Heart right ventricle (tissue), 16 donors: ENCODE measurements at regions of chr15 and their contacts with region 1.

Region 1: DNA sequence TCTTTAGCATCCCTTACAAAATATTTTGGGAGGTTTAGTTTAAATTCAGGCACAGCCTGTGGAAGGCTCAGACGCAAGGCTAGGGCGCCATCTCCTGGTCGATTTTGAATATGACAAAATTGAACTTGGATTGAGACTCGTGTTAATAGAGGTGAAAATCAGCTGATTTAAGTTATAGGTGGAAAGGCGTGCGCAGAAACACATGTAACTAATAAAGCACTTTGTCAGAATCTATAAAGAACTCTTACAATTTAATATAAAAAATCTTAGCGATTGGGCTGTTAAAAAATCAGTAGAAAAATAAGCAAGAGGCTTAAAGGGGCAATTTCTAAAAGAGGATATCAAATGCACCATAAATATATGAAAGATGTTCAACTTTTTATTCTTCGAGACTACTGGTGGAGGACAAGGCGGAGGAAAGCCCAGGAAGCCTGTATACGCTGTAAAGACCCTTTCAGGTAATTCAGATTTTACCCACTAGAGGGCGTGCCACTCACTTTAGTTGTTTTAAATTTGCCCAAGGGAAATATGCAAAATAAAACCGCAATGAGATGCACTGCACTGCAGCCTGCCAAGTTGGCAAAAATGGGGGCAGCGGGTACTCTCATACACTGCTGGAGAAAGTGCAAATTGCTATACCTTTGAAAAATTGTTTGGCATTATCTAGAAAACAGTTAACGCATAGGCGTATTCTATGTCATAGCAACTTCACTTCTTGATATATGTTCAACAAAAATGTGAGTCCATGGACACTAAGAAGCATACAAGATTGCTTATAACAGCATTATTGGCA is 64.7 kb downstream of the SLC30A4 start:
- DNase-seq: peak in 1 of 2 donors; percentile 82
- ATAC-seq: peak; percentile 63 to 90 (median 82)
- H3K4me3 ChIP-seq: peak overlapping the region; percentile 12 to 72 (median 52)
- H3K27ac ChIP-seq: peak overlapping the region in 9 of 10 donors; percentile 33 to 83 (median 71)
- H3K4me1 ChIP-seq: peaks cover 0 to 52% (median 0%) of the 10 kb centered on the region in 9 donors
- H3K27me3 ChIP-seq: no peaks in the 10 kb centered on the region
- CTCF ChIP-seq: peak; percentile 60 to 82 (median 76)

Region 2: GRCh38 chr15:45166834-45167630 is 290.8 kb before region 1 on chr15:
- intact Hi-C with region 1: loop called in 6 of 10 experiments (anchors 2 to 10 kb)
- DNase-seq: peak; percentile 86 to 89
- ATAC-seq: peak; percentile 81 to 90 (median 86)
- H3K4me3 ChIP-seq: peak overlapping the region; percentile 42 to 92 (median 78)
- H3K27ac ChIP-seq: peak overlapping the region; percentile 97 to 100 (median 99)
- H3K4me1 ChIP-seq: peaks cover 0 to 42% (median 19%) of the 10 kb centered on the region in 9 donors
- H3K27me3 ChIP-seq: no peaks in the 10 kb centered on the region
- CTCF ChIP-seq: peak in 8 of 9 donors; percentile 53 to 72 (median 64)

Region 3: DNA sequence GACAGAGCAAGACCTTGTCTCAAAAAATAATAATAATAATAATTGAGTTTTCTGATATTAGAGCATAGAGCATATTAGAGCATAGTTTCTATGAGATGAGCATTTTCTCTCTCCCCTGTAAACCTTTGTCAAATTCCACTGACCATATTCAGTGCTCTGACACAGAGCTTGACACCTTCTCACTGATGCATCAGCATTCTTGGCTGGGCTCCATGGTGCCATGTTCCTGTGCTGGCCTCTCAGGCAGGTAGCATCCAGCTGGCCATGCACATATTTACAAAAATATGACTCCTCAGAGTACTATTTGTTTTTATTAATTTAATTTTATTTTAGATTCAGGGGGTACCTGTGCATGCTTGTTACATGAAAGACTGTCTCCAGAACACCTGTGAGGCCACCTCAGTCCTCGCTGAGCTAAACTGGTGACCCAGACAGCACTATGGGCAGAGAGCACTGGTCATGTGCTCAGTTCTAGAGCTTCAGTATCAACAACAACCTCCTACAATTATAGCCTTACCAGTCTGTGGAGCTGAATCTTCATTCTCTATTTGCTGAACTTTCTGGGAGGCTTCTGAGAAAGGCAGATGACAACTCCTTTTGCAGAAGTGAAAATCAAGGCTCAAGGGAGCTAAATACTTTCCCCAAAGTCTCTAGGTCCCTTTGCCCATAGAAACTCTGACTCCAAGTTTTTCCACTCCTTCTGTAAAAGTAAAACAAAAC is 227.4 kb before region 1 on chr15:
- intact Hi-C with region 1: no loop called
- DNase-seq: no peak
- ATAC-seq: no peak
- H3K4me3 ChIP-seq: no peak overlapping the region
- H3K27ac ChIP-seq: no peak overlapping the region
- H3K4me1 ChIP-seq: peaks cover 0 to 11% (median 0%) of the 10 kb centered on the region in 9 donors
- H3K27me3 ChIP-seq: no peaks in the 10 kb centered on the region
- CTCF ChIP-seq: no peak

Region 4: DNA sequence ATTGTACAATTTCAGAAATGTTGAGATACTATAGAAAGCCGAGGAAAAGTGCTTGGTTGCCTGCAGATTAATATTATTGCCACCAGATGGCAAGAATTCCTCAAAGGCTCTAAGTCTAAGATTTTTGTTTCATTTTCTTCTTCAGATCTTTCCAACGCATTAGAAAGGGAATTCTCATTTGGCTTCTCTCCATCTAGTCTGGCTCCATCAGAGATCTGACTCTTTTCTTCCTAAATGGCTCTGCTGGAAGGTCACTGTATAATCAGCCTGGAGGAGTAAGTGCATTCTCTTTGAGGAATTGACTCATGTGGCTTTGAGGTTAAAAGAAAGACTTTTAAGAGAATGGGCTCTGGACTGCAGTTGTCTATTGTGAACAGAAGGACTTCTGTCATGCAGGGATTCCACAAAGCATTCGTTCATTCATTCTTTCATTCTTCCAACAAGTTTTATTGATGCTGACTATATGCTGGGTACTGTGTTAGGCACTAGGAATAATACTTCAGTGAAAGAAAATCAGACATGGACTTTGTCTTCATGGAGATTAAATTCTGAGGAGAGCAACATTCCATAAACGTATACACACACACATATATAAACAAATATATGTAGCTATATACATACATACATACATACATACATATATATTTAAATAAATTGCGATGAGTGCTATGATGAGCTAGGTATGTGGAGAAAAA is 150.5 kb before region 1 on chr15:
- intact Hi-C with region 1: loop called in 2 of 10 experiments (anchors 1 to 5 kb)
- DNase-seq: peak in 1 of 2 donors; percentile 16
- ATAC-seq: peak in 7 of 8 donors; percentile 42 to 72 (median 59)
- H3K4me3 ChIP-seq: peak overlapping the region in 6 of 10 donors; percentile 16 to 36 (median 22)
- H3K27ac ChIP-seq: peak overlapping the region in 3 of 10 donors; percentile 2 to 36 (median 16)
- H3K4me1 ChIP-seq: peaks cover 0 to 12% (median 0%) of the 10 kb centered on the region in 9 donors
- H3K27me3 ChIP-seq: peaks cover 0 to 12% (median 3%) of the 10 kb centered on the region in 7 donors
- CTCF ChIP-seq: peak in 8 of 9 donors; percentile 36 to 76 (median 64)

Region 5: DNA sequence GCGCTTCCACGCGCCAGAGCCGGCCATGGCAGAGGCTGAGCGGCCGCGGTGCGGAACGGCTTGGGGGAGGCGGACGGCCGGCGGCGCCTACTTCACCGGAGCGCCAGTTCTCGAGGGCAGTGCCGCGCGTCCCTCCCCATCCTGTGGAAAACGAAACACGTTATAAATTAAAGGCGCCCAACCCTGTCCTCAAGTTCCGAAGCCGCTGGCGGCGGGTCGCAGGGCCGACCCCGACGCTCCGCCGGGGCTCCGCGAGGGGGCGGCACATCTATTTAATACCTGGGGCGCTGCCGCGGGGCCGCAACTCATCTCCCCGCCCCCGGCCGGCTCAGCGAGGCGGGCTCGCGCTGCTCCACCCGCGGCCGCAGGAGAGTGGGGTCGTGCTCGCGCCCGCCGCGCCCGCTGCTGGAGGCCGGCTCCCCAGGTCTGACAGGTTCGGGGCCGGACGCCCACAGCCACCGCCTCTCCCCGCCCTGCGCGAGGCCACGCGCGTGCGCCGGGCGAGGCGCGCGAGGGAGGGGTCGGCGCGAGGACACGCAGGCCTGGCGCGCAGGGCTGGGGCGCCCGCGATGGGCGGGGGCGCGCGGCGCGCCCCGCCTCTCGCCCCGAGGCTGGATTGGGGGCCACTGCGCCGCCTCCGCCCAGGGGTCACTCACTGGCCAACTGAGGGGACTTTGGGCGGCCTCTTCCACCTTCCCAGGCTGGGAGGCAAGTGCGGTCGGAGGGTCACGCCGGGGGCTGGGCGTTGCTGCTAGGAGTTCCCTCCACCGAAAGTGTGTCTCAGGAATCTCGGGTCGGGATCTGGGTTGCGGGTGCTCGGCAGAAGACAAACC is 64.7 kb after region 1 on chr15 and contains the start of gene SLC30A4:
- intact Hi-C with region 1: loop called in 1 of 10 experiments (anchors 1 kb)
- DNase-seq: peak; percentile 54 to 79
- ATAC-seq: peak; percentile 91 to 99 (median 96)
- H3K4me3 ChIP-seq: peak within 1 kb of the TSS; percentile 54 to 96 (median 86)
- H3K27ac ChIP-seq: peak within 1 kb of the TSS; percentile 70 to 91 (median 86)
- H3K4me1 ChIP-seq: peaks cover 0 to 30% (median 25%) of the 10 kb centered on the region in 9 donors
- H3K27me3 ChIP-seq: peaks cover 0 to 31% (median 0%) of the 10 kb centered on the region in 7 donors
- CTCF ChIP-seq: peak; percentile 12 to 72 (median 51)
- total RNA-seq, gene SLC30A4: 2.5 to 4.5 (median 3.1) TPM

Region 6: GRCh38 chr15:46523701-46524100 is 1065.9 kb after region 1 on chr15:
- intact Hi-C with region 1: loop called in 1 of 10 experiments (anchors 5 kb)
- DNase-seq: no peak
- ATAC-seq: no peak
- H3K4me3 ChIP-seq: no peak overlapping the region
- H3K27ac ChIP-seq: no peak overlapping the region
- H3K4me1 ChIP-seq: no peaks in the 10 kb centered on the region
- H3K27me3 ChIP-seq: no peaks in the 10 kb centered on the region
- CTCF ChIP-seq: no peak